H1 (cell line): ENCODE measurements at regions of chr6 and their contacts with region 1.

Region 1: GRCh38 chr6:33299237-33299944 is 649 bp upstream of the RGL2 start:
- DNase-seq: peak in 1 of 2 experiments; percentile 90
- H3K4me3 ChIP-seq: peak overlapping the region; percentile 76 to 99 (median 94)
- H3K27ac ChIP-seq: peak overlapping the region; percentile 79
- H3K4me1 ChIP-seq: peaks cover 0 to 6% (median 4%) of the 10 kb centered on the region in 4 experiments; a peak in 6 of 7 replicates
- H3K27me3 ChIP-seq: no peaks in the 10 kb centered on the region
- CTCF ChIP-seq: peak; percentile 73 to 86 (median 78)
- EP300 ChIP-seq: no peak
- POLR2A ChIP-seq: 0 out of 3 replicates have a peak, but pooled peaks of 1 of the 2 experiments have one; percentile 19
- RAD21 ChIP-seq: peak; percentile 32 to 56

Region 2: GRCh38 chr6:33172688-33173534 is 126.5 kb before region 1 on chr6:
- CTCF ChIA-PET with region 1: no interaction called
- POLR2A ChIA-PET with region 1: no interaction called
- DNase-seq: peak in 1 of 2 experiments; percentile 72
- H3K4me3 ChIP-seq: no peak overlapping the region
- H3K27ac ChIP-seq: no peak overlapping the region
- H3K4me1 ChIP-seq: no peaks in the 10 kb centered on the region; a peak in 2 of 7 replicates
- H3K27me3 ChIP-seq: no peaks in the 10 kb centered on the region
- CTCF ChIP-seq: peak in 2 of 3 experiments; percentile 87 to 93; a peak in 3 of 4 replicates
- EP300 ChIP-seq: no peak
- POLR2A ChIP-seq: no peak
- RAD21 ChIP-seq: peak; percentile 93 to 97

Region 3: DNA sequence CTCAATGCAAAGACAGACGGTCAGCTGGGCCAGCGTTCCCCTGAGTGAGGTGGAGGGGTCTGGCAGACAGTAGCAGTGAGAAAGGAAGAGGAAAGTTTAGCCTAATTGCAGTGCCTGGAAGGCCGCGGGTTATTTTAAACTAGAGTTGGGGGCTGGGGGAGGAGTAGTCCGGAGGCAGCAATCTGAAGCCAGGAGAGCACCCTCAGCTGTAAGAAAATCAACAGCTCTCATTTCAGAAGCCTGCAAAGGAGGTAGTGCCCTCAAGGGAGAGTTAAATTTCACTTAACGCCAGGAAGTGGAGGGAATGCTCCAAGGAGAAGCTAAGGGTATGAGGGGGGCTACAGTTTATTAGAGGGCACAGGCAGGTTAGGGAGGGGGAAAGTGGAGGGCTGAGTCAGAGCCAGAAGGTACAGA is 64.2 kb before region 1 on chr6:
- CTCF ChIA-PET with region 1: no interaction called
- POLR2A ChIA-PET with region 1: no interaction called
- DNase-seq: no peak
- H3K4me3 ChIP-seq: no peak overlapping the region
- H3K27ac ChIP-seq: no peak overlapping the region
- H3K4me1 ChIP-seq: peaks cover 0 to 3% (median 2%) of the 10 kb centered on the region in 4 experiments; a peak in 3 of 7 replicates
- H3K27me3 ChIP-seq: peaks cover 0 to 3% (median 0%) of the 10 kb centered on the region in 4 experiments; a peak in 1 of 7 replicates
- CTCF ChIP-seq: no peak
- EP300 ChIP-seq: no peak
- POLR2A ChIP-seq: no peak
- RAD21 ChIP-seq: no peak

Region 4: DNA sequence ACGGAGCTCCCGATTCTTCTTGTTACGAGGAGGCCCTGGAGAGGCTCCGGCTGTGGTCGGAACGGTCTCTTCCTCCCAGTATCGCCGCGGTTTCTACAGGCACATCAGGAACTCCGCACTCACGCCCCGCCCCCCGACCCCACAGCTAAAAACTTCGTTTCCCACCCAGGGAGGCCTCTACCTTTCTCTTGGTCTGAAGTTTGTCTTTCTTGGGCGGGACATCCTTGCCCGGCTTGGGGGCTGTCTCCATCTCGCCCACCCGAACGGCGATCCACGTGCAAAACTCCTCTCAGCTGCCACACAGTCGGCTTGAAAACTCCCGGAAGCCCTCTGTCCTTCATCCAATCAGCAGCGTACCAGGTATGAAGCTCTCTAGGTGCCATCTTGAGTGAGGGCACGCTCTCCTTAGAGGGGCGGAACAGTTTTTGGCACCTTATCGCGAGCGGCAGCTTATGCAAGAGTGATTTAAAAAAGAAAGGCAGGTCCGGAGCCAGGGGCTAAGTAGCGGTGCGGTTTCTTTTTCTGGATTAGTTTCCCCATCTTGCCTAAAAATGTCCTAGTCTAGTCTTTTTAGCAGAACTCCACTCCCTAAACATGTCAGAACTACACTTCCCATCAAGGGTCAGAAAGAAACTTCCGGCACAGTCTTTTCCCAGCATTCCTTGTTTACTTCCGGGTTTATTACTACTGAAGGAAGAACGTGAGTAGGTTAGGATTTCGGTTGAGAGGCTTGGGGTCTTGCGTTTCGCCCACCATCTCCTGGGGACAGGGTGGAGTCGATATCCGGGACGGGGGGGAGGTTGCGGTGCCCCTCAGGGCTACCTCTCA is 10.3 kb before region 1 on chr6 and contains the starts of genes PFDN6 and WDR46:
- CTCF ChIA-PET with region 1: interaction called, 17 read pairs
- POLR2A ChIA-PET with region 1: interaction called, 337 read pairs
- DNase-seq: peak in 1 of 2 experiments; percentile 84
- H3K4me3 ChIP-seq: peak within 1 kb of the TSS; percentile 74 to 97 (median 84)
- H3K27ac ChIP-seq: peak within 1 kb of the TSS; percentile 37; the same call in 1 of the 2 replicates
- H3K4me1 ChIP-seq: peaks cover 0 to 11% (median 5%) of the 10 kb centered on the region in 4 experiments; a peak in 5 of 7 replicates
- H3K27me3 ChIP-seq: no peaks in the 10 kb centered on the region
- CTCF ChIP-seq: no peak
- EP300 ChIP-seq: no peak
- POLR2A ChIP-seq: peak in 1 of 2 experiments; percentile 76; a peak in 2 of 3 replicates
- RAD21 ChIP-seq: no peak
- total RNA-seq, gene PFDN6: 93.3 and 95.7 TPM in 2 replicates
- total RNA-seq, gene WDR46: 91.0 and 99.4 TPM in 2 replicates

Region 5: DNA sequence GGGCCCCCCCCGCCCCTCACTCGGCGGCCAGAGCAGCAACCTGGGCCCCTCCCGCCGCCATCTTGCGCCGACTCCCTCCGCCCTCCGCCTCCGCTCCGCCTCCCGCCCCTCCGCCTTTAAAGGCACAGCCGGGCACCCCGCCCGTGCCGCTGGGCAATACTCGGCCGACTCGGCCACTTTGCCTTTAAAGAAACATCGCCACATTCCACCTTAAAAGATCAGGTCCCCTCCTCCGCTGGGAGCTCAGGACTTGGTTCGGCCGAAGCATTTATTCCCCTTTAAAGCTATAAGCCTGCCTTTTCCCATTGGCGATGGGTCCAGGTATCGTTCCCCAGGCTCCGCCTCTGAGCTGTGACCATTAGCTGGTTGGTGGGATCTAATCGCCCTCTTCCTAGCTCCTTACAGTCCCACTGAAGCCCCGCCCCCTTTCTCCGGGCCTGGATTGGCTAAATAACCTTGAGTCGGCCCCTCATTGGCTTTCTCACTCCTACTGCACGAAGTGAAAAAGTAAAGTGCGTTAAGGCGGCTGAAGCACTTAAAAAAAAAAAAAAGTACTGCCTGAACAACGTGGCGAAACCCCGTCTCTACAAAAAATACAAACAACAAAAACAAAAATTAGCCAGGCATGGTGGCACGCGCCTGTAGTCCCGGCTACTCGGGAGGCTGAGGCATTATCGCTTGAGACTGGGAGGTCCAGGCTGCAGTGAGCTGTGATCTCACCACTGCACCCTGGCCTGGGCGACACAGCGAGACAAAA is 18.5 kb after region 1 on chr6 and contains the start of gene ZBTB22:
- CTCF ChIA-PET with region 1: interaction called, 17 read pairs
- POLR2A ChIA-PET with region 1: interaction called, 37 read pairs
- DNase-seq: peak; percentile 95 to 96
- H3K4me3 ChIP-seq: peak within 1 kb of the TSS; percentile 67 to 89 (median 78)
- H3K27ac ChIP-seq: peak within 1 kb of the TSS; percentile 83
- H3K4me1 ChIP-seq: peaks cover 0 to 34% (median 22%) of the 10 kb centered on the region in 4 experiments; a peak in 6 of 7 replicates
- H3K27me3 ChIP-seq: no peaks in the 10 kb centered on the region
- CTCF ChIP-seq: no peak
- EP300 ChIP-seq: no peak
- POLR2A ChIP-seq: peak in 1 of 2 experiments; percentile 70; a peak in 2 of 3 replicates
- RAD21 ChIP-seq: no peak
- total RNA-seq, gene ZBTB22: 9.8 and 9.9 TPM in 2 replicates

Region 6: DNA sequence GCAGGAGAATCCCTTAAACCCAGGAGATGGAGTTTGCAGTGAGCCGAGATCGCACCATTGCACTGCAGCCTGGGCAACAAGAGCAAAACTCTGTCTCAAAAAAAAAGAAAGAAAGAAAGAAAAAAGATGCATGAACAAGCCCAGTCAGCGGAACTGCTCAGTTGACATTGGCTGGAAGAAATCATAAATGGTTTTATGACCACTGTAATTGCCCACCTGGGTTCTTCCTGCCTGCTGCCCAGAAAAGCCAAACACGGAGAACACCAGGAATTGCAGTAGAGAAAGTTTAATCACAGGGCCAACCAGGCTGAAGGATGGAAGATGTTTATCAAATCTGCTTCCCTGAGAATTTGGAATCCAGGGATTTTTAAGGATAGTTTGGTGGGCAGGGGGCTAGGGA is 258.0 kb after region 1 on chr6:
- CTCF ChIA-PET with region 1: no interaction called
- POLR2A ChIA-PET with region 1: no interaction called
- DNase-seq: no peak
- H3K4me3 ChIP-seq: no peak overlapping the region
- H3K27ac ChIP-seq: no peak overlapping the region
- H3K4me1 ChIP-seq: no peaks in the 10 kb centered on the region
- H3K27me3 ChIP-seq: no peaks in the 10 kb centered on the region
- CTCF ChIP-seq: no peak
- EP300 ChIP-seq: no peak
- POLR2A ChIP-seq: no peak
- RAD21 ChIP-seq: no peak

Region 7: DNA sequence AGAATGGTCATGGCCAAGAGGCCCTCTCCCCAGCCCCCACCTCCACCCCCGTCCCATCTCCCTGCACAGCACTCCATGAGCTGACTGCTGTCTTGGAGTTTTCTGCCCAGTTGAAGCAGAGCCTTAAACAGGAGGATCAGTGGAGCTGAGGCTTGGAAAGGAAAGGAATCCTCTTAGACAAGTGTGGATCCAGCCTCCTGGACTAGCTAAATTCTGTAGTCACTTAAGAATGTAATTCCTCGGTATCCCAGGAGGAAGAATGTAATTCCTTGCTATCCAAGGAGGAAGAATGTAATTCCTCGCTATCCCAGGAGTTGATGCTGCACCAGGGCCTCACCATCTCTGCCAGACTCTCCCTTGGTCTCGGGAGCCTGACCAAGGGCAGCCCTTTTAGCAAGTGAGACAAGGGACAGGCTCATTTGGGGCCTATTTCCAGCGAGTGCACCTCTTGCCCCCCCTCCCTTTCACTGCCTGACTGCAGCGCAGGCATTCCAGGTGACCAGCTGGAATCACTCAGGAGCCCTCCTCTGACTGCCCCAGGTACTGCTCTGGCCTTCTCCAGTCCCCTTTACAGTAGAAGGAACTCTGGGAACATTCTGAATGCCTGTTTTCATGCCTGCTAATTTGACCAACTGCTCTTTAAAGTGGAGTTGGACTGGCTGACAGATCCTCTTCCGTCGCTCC is 1765.5 kb after region 1 on chr6:
- CTCF ChIA-PET with region 1: no interaction called
- POLR2A ChIA-PET with region 1: no interaction called
- DNase-seq: no peak
- H3K4me3 ChIP-seq: no peak overlapping the region
- H3K27ac ChIP-seq: 0 out of 2 replicates have a peak overlapping the region, but pooled peaks have one; percentile 34
- H3K4me1 ChIP-seq: peaks cover 0 to 16% (median 9%) of the 10 kb centered on the region in 4 experiments; a peak in 6 of 7 replicates
- H3K27me3 ChIP-seq: no peaks in the 10 kb centered on the region
- CTCF ChIP-seq: peak in 2 of 3 experiments; percentile 50 to 56; a peak in 3 of 4 replicates
- EP300 ChIP-seq: no peak
- POLR2A ChIP-seq: no peak
- RAD21 ChIP-seq: peak; percentile 52 to 63